ENCODE measurements at regions of chr2 and their contacts with region 1.

Region 1: DNA sequence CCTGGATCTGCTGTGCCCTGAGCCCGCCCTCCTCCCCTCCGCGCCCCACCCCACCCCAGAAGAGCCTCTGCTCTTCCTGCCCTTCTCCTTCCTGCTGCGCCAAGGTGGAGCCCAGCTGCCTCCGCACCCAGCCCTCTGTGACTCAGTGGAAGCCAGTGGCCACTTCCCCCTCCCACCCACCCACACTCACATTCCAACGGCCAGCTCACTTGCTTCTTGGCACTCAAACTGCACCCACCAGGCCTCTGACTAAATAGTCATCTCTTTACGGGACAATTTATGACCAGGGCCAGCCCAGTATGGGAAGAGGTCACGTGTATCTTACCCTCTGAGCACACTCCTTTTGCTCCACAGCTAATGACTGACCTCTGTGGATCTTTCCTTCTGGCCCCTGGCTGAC is 150.4 kb upstream of the SLC1A4 start:
- DNase-seq: peak; percentile 96
- H3K27ac ChIP-seq: peak overlapping the region; percentile 94
- CTCF ChIP-seq: no peak

Region 2: DNA sequence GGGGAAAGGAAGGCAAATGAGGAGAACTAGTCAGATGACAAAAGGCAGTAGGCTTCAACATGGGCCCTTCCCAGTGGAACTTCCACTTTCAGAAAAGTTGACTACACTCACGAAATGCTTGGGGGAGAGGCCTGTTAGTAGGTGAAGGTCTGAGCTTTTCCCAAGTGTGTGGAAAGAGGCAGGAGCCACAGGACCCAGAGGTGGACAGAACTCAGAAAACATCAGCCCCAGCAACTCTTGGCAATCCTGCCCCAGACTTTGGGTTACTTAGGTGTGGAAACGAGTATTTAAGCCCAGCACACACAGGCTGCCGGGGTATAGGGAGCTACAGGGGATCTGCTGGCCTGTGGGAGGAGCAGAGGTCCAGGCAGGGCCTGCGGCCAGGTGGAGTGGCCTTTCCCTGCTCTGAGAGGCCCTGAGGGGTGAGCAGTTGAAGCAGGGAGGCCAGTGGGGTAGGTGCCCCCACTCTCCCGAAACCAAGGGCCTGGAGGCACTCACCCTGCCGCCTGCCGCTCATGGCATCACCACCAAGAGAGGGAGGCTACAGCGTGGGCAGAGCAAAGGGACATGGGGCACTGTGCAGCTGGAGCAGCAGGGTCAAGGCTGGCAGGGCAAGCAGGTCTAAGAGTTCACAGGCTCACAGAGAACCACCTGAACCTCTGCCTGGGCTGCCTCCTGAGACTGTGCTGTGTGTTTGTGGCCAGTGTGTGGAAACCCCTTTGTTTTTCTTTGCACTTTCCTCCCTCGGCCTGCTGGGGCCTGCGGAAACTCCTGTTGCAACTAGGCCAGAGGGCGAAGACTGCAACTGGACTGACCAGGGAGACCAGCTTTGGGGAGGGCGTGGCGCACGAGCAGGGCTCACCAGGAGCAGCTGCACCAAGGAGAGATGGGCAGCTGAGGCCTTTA is 54.4 kb before region 1 on chr2:
- CTCF ChIA-PET with region 1: no interaction called
- POLR2A ChIA-PET with region 1: interaction called, 13 read pairs
- DNase-seq: no peak
- H3K27ac ChIP-seq: 0 out of 2 replicates have a peak overlapping the region, but pooled peaks have one; percentile 3
- CTCF ChIP-seq: no peak

Region 3: GRCh38 chr2:64873472-64873924 is 34.7 kb after region 1 on chr2:
- CTCF ChIA-PET with region 1: no interaction called
- POLR2A ChIA-PET with region 1: interaction called, 16 read pairs
- DNase-seq: peak; percentile 57
- H3K27ac ChIP-seq: peak overlapping the region; percentile 22; the same call in 1 of the 2 replicates
- CTCF ChIP-seq: peak; percentile 95